Esophagus squamous epithelium (tissue), 5 donors: ENCODE measurements at regions of chr6 and their contacts with region 1.

Region 1: DNA sequence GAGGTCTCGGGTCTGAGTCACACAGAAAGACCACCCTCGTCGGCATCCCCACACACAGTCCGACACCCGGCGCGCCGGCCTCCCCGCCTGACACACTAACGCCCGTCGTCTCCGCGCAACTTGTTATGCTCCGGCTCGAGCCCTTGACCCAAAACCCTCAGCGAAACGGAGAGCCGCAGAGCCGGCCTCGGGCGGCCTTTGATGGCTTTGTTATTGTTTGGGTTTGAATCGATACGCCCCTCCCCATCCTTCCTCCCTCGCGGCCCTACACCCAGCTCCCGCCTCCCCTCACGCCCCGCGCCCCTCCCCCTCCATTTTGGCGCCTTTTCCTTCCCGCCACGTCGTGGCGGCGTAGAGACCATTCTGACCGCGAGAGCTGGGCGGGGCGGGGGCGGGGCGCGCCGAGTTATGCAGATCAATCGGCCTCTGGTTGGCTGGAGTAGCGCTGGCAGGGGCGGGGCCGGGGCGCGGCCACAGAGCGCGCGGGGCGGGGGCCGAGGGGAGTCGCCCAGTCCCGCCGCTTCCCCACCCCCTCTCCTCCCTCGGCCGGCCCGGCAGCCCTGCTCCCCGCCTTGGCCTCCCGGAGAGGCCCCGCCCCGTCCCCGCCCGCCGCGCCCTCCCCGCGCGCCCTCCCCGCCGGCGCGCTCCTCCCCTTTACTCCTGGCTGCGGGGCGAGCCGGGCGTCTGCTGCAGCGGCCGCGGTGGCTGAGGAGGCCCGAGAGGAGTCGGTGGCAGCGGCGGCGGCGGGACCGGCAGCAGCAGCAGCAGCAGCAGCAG is at the start of gene PIM1:
- DNase-seq: peak; percentile 95
- H3K4me3 ChIP-seq: peak within 1 kb of the TSS; percentile 71 to 90 (median 86)
- H3K27ac ChIP-seq: peak within 1 kb of the TSS; percentile 95 to 98 (median 96)
- H3K4me1 ChIP-seq: peaks cover 12 to 55% (median 23%) of the 10 kb centered on the region in 3 donors
- H3K27me3 ChIP-seq: no peaks in the 10 kb centered on the region
- CTCF ChIP-seq: peak in 2 of 6 experiments; percentile 6 to 11
- POLR2A ChIP-seq: peak in 3 of 4 donors; percentile 83 to 98 (median 97)
- total RNA-seq, gene PIM1: 57.3 to 206 (median 96.6) TPM

Region 2: GRCh38 chr6:37029249-37029971 is 140.3 kb before region 1 on chr6:
- intact Hi-C with region 1: loop called (anchors 10 kb)
- DNase-seq: no peak
- H3K4me3 ChIP-seq: no peak overlapping the region
- H3K27ac ChIP-seq: peak overlapping the region in 3 of 4 donors; percentile 44 to 63 (median 53)
- H3K4me1 ChIP-seq: peaks cover 8 to 39% (median 13%) of the 10 kb centered on the region in 3 donors
- H3K27me3 ChIP-seq: no peaks in the 10 kb centered on the region
- CTCF ChIP-seq: peak; percentile 46 to 69 (median 65)
- POLR2A ChIP-seq: no peak

Region 3: DNA sequence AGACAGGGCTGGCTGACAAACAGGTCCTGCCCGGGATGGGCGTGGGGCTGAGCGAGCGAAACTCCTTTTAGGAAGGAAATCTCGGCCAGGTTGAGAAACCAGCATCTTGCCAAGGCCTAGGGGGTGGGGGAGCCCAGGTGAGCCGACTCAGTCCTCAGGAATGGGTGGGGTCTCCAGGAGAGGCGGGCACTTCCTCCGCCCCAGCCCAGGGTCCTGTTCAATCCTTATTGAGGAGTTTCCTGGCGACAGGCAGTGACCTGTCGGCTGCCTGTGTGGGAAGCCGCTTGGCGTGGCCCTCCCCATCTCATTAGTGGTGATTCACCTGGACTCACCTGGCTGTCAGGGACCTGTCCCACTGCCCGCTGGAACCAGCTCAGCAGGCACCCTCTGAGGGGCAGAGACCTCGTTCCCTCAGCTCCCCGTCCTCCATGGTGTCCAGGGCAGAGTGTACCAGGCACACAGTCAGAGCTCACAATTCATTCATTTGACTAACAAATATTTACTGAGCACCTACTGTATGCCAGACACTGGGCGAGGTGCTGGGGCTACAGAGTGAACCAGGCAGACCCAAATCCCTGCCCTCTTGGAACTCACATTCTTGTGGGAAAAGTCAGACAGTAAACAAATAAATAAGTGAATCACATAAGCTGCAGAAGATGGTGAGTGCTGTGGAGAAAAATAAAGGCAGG is 113.1 kb before region 1 on chr6:
- intact Hi-C with region 1: loop called (anchors 2 kb)
- DNase-seq: no peak
- H3K4me3 ChIP-seq: peak overlapping the region in 1 of 4 donors; percentile 6
- H3K27ac ChIP-seq: peak overlapping the region; percentile 75 to 91 (median 86)
- H3K4me1 ChIP-seq: peaks cover 32 to 78% (median 41%) of the 10 kb centered on the region in 3 donors
- H3K27me3 ChIP-seq: no peaks in the 10 kb centered on the region
- CTCF ChIP-seq: no peak
- POLR2A ChIP-seq: no peak